Caco-2 (cell line): ENCODE measurements at regions of chr11 and their contacts with region 1.

Region 1: DNA sequence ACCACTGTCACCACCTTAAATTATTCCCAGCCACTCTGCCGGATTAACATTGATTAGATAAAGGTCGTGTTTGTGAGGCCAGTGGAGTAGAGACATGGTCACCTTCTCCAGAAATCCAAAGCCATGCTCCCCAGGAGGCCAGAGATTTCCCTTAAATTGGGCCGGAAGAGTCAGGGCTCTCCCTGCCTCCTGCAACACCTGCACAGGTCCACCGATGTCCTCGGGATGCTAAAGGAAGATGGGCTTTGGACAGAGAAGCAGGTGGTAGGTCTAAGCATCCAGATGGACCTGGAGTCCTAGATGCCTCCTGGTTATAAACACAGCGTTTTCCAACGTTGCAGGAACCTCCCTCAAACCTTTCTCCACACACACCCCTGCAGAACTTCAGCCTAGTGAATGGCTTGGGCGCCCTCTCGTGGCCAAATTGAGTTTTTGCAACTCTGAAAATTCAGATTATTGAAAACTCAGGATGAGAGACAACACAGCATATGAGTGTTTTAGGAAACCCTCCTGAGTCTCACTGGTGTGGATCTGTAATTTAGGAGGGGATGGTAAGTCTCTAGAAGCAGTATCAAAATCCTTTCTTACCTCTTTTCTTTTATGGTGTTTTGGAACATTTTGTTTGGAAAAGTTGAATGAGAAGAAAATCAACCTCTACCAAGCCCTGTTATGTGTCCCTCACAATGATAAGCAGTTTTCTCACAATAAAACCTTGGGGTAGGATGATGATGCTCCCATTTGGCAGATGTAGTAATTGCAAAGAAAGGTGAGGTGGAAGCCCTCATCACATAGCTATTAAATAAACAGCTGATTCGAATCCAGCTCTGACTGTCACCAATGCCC is 109.6 kb downstream of the RRAS2 start:
- DNase-seq: peak; percentile 59 to 70
- H3K4me3 ChIP-seq: no peak overlapping the region
- H3K4me3 Mint-ChIP-seq: no peak overlapping the region
- H3K27ac Mint-ChIP-seq: no peak overlapping the region
- H3K4me1 ChIP-seq: peaks cover 4% of the 10 kb centered on the region
- H3K4me1 Mint-ChIP-seq: peaks cover 7% of the 10 kb centered on the region
- H3K27me3 ChIP-seq: no peaks in the 10 kb centered on the region
- H3K27me3 Mint-ChIP-seq: no peaks in the 10 kb centered on the region
- CTCF ChIP-seq: peak; percentile 85 to 93

Region 2: GRCh38 chr11:13772223-13773046 is 476.9 kb before region 1 on chr11:
- CTCF ChIA-PET with region 1: interaction called, 4 read pairs
- POLR2A ChIA-PET with region 1: no interaction called
- intact Hi-C with region 1: loop called (anchors 1 kb)
- DNase-seq: peak in 1 of 2 experiments; percentile 70
- H3K4me3 ChIP-seq: no peak overlapping the region
- H3K4me3 Mint-ChIP-seq: no peak overlapping the region
- H3K27ac Mint-ChIP-seq: no peak overlapping the region
- H3K4me1 ChIP-seq: 0 out of 2 replicates have a peak, but pooled peaks cover 8% of the 10 kb centered on the region
- H3K4me1 Mint-ChIP-seq: no peaks in the 10 kb centered on the region
- H3K27me3 ChIP-seq: no peaks in the 10 kb centered on the region
- H3K27me3 Mint-ChIP-seq: peaks cover 2% of the 10 kb centered on the region
- CTCF ChIP-seq: peak; percentile 53 to 75

Region 3: GRCh38 chr11:13868710-13869397 is 380.5 kb before region 1 on chr11:
- CTCF ChIA-PET with region 1: interaction called, 3 read pairs
- POLR2A ChIA-PET with region 1: no interaction called
- intact Hi-C with region 1: loop called (anchors 1 kb)
- DNase-seq: no peak
- H3K4me3 ChIP-seq: no peak overlapping the region
- H3K4me3 Mint-ChIP-seq: no peak overlapping the region
- H3K27ac Mint-ChIP-seq: no peak overlapping the region
- H3K4me1 ChIP-seq: no peaks in the 10 kb centered on the region
- H3K4me1 Mint-ChIP-seq: no peaks in the 10 kb centered on the region
- H3K27me3 ChIP-seq: no peaks in the 10 kb centered on the region
- H3K27me3 Mint-ChIP-seq: peaks cover 18% of the 10 kb centered on the region
- CTCF ChIP-seq: no peak

Region 4: DNA sequence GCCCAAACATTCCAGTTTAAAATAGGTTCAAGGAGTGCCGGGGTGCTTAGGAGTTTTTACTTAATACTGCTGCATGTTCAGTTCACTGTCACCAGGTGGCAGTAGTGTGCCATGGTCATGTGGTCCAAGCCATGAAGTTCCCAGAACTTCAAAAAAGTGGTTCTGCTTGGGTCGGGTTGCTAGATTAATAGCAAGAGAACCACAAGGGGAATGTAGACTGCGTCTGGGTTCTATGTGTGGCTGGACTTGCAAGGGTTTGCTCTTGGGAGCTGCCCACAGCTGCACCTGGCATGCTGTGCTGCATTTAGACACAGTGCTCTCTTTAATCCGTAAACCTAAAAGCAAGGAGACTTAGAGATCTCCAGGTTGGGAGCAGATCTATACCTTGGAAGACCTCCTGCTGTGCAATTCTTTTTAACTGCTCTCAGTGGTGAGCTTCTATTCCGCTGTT is 293.3 kb before region 1 on chr11:
- CTCF ChIA-PET with region 1: interaction called, 4 read pairs
- POLR2A ChIA-PET with region 1: no interaction called
- intact Hi-C with region 1: loop called (anchors 1 kb)
- DNase-seq: peak; percentile 55 to 69
- H3K4me3 ChIP-seq: no peak overlapping the region
- H3K4me3 Mint-ChIP-seq: no peak overlapping the region
- H3K27ac Mint-ChIP-seq: no peak overlapping the region
- H3K4me1 ChIP-seq: no peaks in the 10 kb centered on the region
- H3K4me1 Mint-ChIP-seq: no peaks in the 10 kb centered on the region
- H3K27me3 ChIP-seq: no peaks in the 10 kb centered on the region
- H3K27me3 Mint-ChIP-seq: peaks cover 3% of the 10 kb centered on the region
- CTCF ChIP-seq: peak; percentile 87 to 97

Region 5: DNA sequence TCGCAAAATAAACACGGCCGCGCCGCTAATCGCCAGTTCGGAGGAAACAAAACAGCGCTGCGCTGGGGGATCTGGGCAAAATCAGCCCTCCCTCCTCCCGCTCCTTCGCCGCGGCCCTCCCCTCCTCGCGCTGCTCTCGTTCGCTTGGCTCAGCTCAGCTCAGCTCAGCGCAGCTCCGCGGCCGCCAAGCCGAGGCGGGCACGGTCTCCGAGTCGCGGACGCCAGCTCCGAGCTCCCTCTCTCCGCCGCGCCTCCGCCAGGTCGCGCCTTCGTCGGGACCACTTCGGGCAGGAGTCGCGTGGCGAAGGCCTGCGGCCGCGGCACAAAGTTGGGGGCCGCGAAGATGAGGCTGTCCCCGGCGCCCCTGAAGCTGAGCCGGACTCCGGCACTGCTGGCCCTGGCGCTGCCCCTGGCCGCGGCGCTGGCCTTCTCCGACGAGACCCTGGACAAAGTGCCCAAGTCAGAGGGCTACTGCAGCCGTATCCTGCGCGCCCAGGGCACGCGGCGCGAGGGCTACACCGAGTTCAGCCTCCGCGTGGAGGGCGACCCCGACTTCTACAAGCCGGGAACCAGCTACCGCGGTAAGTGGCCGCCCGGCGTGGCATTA is 286.7 kb before region 1 on chr11 and contains the start of gene SPON1:
- CTCF ChIA-PET with region 1: interaction called, 4 read pairs
- POLR2A ChIA-PET with region 1: no interaction called
- intact Hi-C with region 1: loop called (anchors 2 kb)
- DNase-seq: peak; percentile 70 to 76
- H3K4me3 ChIP-seq: peak within 1 kb of the TSS; percentile 94
- H3K4me3 Mint-ChIP-seq: peak within 1 kb of the TSS; percentile 75
- H3K27ac Mint-ChIP-seq: peak within 1 kb of the TSS; percentile 76
- H3K4me1 ChIP-seq: peaks cover 35% of the 10 kb centered on the region
- H3K4me1 Mint-ChIP-seq: peaks cover 22% of the 10 kb centered on the region
- H3K27me3 ChIP-seq: no peaks in the 10 kb centered on the region
- H3K27me3 Mint-ChIP-seq: peaks cover 5% of the 10 kb centered on the region
- CTCF ChIP-seq: no peak
- total RNA-seq, gene SPON1: 41.4 and 46.9 TPM in 2 replicates

Region 6: GRCh38 chr11:14041040-14041439 is 208.3 kb before region 1 on chr11:
- CTCF ChIA-PET with region 1: no interaction called
- POLR2A ChIA-PET with region 1: no interaction called
- intact Hi-C with region 1: loop called (anchors 1 kb)
- DNase-seq: peak in 1 of 2 experiments; percentile 34
- H3K4me3 ChIP-seq: no peak overlapping the region
- H3K4me3 Mint-ChIP-seq: no peak overlapping the region
- H3K27ac Mint-ChIP-seq: no peak overlapping the region
- H3K4me1 ChIP-seq: peaks cover 15% of the 10 kb centered on the region
- H3K4me1 Mint-ChIP-seq: no peaks in the 10 kb centered on the region
- H3K27me3 ChIP-seq: no peaks in the 10 kb centered on the region
- H3K27me3 Mint-ChIP-seq: no peaks in the 10 kb centered on the region
- CTCF ChIP-seq: peak; percentile 43 to 67